ENCODE measurements at regions of chr10 and their contacts with region 1.

Region 1: DNA sequence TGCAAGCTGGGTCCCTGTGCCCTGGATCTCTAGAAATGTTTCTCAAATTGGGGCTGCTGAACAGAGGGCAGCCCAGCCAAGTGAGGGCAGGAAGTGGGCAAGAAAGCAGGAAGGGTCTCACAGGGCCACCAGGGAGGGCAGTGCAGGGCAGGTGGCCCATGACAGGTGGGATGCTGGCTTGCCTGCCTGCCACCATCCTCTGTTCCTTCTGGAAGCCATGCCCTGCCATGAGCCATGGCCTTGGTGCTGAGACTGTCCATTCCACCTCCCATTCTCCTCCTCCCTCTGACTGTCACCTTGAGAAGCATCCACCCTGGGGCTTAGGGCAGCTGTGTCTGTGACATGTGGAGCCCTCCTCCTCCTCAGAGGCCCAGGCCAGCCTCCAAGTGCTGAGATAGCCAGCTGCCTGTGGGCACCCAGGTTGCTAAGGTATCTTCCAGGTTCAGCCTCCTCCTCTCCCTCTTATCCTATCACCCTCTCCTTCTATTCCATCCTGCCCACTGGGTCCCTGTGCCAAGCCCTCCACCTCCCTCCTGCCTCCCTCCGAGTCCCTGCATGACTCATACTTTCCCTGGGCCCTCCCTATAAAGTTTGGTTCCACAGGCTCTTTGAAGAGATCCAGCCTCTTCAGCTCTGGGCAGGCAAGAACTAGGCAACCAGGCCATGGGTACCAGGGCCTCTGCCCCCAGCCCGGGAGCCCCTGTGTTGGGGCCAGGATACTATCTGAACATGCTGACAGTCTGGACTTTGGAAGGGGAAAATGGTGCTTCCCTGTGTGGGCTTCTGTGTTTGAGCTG is 1.3 kb downstream of the VSIR start:
- DNase-seq: peak; percentile 66
- ATAC-seq: peak; percentile 32
- H3K4me3 ChIP-seq: no peak overlapping the region
- H3K27ac ChIP-seq: peak overlapping the region; percentile 7
- H3K4me1 ChIP-seq: peaks cover 44% of the 10 kb centered on the region
- H3K27me3 ChIP-seq: 0 out of 2 replicates have a peak, but pooled peaks cover 2% of the 10 kb centered on the region
- CTCF ChIP-seq: no peak
- POLR2A ChIP-seq: no peak
- RAD21 ChIP-seq: no peak

Region 2: DNA sequence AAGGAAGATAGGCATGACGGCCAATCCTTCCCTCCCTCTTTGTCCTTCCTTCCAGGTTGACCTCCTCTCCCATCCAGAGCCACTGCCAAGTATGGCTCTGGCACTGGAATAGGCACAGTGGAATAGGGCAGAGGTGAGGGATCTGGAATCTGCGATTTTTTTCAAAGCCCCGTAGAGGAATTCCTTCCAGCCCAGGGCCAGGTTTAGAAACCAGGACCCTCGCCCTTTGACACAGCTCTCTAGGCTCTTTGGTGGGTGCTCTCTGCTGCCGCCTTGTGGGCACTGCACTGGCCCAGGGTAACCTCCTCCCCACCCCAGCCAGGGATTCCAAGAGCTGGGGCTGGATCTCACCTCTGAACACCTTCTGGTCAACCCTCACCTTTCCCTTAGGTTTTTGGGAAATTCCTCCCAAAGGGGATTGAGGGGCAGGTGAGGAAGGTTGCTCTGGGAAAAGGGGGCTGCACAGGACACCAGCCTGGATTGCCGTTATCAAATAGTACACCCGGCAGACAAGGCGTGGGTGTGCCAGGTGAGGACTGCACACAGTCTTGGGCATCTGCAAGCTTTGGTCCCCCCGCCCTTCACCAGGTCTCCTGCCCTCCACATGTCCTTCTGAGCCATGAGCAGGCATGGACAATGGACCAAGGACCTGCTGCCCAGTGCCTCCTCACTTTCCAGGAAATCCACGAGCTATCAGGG is 75.2 kb before region 1 on chr10:
- CTCF ChIA-PET with region 1: no interaction called
- POLR2A ChIA-PET with region 1: no interaction called
- dilution Hi-C with region 1: no loop called
- in situ Hi-C with region 1: no loop called
- intact Hi-C with region 1: loop called (anchors 5 kb)
- DNase-seq: no peak
- ATAC-seq: peak; percentile 89
- H3K4me3 ChIP-seq: no peak overlapping the region
- H3K27ac ChIP-seq: no peak overlapping the region
- H3K4me1 ChIP-seq: no peaks in the 10 kb centered on the region
- H3K27me3 ChIP-seq: peaks cover 37% of the 10 kb centered on the region
- CTCF ChIP-seq: peak; percentile 63
- POLR2A ChIP-seq: no peak
- RAD21 ChIP-seq: peak; percentile 50